ENCODE measurements at regions of chr7 and their contacts with region 1.

Region 1: GRCh38 chr7:33895025-33895804 is 10.1 kb upstream of the BMPER start:
- DNase-seq: peak; percentile 82 to 87
- ATAC-seq: peak; percentile 83 to 98 (median 94)
- H3K4me3 ChIP-seq: peak overlapping the region in 1 of 10 donors; percentile 24
- H3K27ac ChIP-seq: no peak overlapping the region
- H3K4me1 ChIP-seq: peaks cover 0 to 10% (median 7%) of the 10 kb centered on the region in 9 donors
- H3K27me3 ChIP-seq: peaks cover 0 to 26% (median 19%) of the 10 kb centered on the region in 7 donors
- CTCF ChIP-seq: peak; percentile 84 to 95 (median 93)

Region 2: DNA sequence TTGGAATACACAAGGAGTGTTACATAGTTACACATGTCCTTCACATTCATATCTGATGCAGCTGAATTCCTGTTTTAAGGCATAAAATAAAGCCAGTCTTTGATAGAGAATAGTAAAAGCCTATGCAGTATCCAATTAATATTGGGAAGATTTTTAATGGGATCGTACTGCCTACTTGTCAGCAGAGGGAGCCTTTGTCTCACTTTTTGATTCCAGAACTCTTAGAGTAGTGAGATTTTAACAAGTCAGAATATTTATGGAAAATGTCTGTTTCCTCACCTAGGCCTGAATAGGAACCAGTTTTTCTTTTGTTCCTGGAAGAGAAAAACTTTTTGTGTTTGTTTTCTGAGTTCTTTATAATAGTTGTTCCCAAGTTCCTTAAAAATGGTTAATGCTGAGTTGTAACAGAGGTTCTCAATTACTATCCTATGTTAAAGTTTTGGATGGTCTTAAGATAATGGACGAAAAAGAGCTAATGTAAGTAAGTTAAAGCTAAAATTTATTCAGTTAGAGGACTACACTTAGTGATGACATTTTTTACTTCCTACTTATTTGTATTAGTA is 651.8 kb before region 1 on chr7:
- intact Hi-C with region 1: loop called in 1 of 10 experiments (anchors 10 kb)
- DNase-seq: peak in 1 of 2 donors; percentile 5
- ATAC-seq: peak in 5 of 8 donors; percentile 38 to 70 (median 56)
- H3K4me3 ChIP-seq: no peak overlapping the region
- H3K27ac ChIP-seq: no peak overlapping the region
- H3K4me1 ChIP-seq: no peaks in the 10 kb centered on the region
- H3K27me3 ChIP-seq: no peaks in the 10 kb centered on the region
- CTCF ChIP-seq: peak; percentile 25 to 79 (median 66)

Region 3: GRCh38 chr7:33757562-33758165 is 137.6 kb before region 1 on chr7:
- intact Hi-C with region 1: loop called (anchors 1 to 10 kb)
- DNase-seq: peak in 1 of 2 donors; percentile 31
- ATAC-seq: peak in 2 of 8 donors; percentile 18 to 38
- H3K4me3 ChIP-seq: no peak overlapping the region
- H3K27ac ChIP-seq: no peak overlapping the region
- H3K4me1 ChIP-seq: peaks cover 0 to 12% (median 10%) of the 10 kb centered on the region in 9 donors
- H3K27me3 ChIP-seq: no peaks in the 10 kb centered on the region
- CTCF ChIP-seq: peak; percentile 64 to 82 (median 70)

Region 4: DNA sequence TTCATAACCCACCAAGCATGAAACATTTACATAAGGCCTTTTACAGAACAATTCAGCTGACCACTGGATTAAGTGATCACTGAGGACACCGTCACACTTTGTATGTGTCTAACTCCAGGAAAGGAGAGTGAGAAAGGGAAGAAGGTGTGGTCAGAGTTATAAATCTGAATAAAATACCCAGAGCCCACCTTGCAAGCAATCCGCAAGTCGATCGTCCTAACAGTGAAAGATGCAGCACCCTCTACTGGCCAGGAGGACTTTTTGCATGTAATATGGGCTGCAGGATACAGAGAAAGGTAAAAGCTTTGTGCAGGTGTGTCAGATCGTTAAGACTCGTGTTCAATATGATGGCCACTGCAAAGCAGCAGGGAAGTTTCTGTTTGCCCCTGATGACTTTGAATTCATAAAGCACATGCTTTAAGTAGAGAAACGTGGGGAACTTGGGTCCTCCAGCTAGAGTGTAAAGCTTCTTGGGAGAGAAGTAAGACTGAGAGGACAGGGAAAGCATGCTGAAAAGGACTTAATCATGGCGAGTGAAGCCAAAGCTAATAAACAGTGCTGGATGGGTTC is 58.3 kb before region 1 on chr7:
- intact Hi-C with region 1: loop called in 1 of 10 experiments (anchors 10 kb)
- DNase-seq: no peak
- ATAC-seq: no peak
- H3K4me3 ChIP-seq: no peak overlapping the region
- H3K27ac ChIP-seq: no peak overlapping the region
- H3K4me1 ChIP-seq: no peaks in the 10 kb centered on the region
- H3K27me3 ChIP-seq: no peaks in the 10 kb centered on the region
- CTCF ChIP-seq: no peak